ENCODE measurements at regions of chr2 and their contacts with region 1.

Region 1: DNA sequence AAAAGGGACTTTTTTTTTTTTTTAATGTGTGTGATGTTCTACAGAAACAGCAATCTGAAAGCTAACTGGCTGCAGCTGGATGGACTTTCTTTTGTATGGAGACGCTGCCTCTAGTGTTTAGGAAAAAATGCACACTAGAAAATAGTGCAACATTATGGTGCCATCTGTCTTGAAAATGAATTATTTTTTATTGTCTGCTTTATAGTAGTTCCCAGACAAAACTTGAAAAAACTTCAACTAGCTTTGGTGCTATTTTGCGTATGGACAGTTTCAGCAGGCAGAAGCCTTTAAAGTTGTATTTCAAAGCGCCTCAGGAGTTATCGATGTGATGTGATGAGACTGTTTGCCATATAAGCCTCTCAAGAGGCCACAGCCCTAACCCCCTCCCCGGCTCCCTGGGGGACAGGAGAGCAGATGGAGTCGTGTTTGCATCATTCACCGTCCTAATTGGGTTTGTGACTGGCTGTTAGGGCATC is 86.9 kb downstream of the LTBP1 start:
- DNase-seq: peak; percentile 10
- ATAC-seq: peak; percentile 67
- H3K4me3 ChIP-seq: no peak overlapping the region
- H3K27ac ChIP-seq: no peak overlapping the region
- H3K4me1 ChIP-seq: no peaks in the 10 kb centered on the region
- H3K27me3 ChIP-seq: no peaks in the 10 kb centered on the region
- CTCF ChIP-seq: peak; percentile 52 to 98 (median 60)
- POLR2A ChIP-seq: no peak
- RAD21 ChIP-seq: peak; percentile 89

Region 2: DNA sequence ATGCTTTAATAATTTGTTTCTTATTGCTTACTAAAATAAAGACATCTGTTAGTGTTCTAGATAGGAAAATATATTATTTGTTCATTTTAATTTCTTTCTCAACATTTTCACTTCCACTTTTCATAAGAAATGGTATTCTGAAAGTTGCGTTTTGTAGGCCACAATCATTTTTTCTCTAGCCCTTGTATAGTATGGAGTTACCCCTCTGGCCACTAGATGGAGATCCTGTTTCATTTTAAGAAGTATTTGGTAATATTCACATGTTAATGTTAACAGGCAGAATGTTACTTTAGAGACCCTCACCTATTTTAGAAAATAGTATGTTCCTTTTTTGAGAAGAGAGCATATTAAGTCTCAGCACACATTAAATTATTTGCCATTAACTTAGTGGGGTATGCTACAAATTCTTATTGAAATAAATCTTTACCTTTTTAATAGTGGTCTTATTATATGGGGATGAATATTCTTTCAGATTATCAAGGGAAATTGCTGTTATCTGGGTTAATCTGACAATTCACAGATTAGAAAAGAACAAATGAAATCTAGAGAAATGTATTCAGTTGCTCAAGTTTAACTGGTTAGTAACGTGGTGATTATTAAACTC is 479.7 kb before region 1 on chr2:
- CTCF ChIA-PET with region 1: interaction called, 5 read pairs
- POLR2A ChIA-PET with region 1: no interaction called
- RAD21 ChIA-PET with region 1: no interaction called
- intact Hi-C with region 1: loop called (anchors 5 kb)
- DNase-seq: peak; percentile 12
- ATAC-seq: peak; percentile 88
- H3K4me3 ChIP-seq: no peak overlapping the region
- H3K27ac ChIP-seq: no peak overlapping the region
- H3K4me1 ChIP-seq: no peaks in the 10 kb centered on the region
- H3K27me3 ChIP-seq: no peaks in the 10 kb centered on the region
- CTCF ChIP-seq: peak; percentile 54 to 77 (median 74); a peak in 5 of 6 replicates
- POLR2A ChIP-seq: no peak
- RAD21 ChIP-seq: peak; percentile 66

Region 3: GRCh38 chr2:33275689-33276444 is 242.2 kb after region 1 on chr2:
- CTCF ChIA-PET with region 1: interaction called, 5 read pairs
- POLR2A ChIA-PET with region 1: no interaction called
- RAD21 ChIA-PET with region 1: no interaction called
- intact Hi-C with region 1: loop called (anchors 2 kb)
- DNase-seq: peak; percentile 6
- ATAC-seq: peak; percentile 76
- H3K4me3 ChIP-seq: no peak overlapping the region
- H3K27ac ChIP-seq: no peak overlapping the region
- H3K4me1 ChIP-seq: peaks cover 0 to 7% of the 10 kb centered on the region in 2 experiments; a peak in 2 of 4 replicates
- H3K27me3 ChIP-seq: no peaks in the 10 kb centered on the region
- CTCF ChIP-seq: no peak
- POLR2A ChIP-seq: no peak
- RAD21 ChIP-seq: no peak

Region 4: DNA sequence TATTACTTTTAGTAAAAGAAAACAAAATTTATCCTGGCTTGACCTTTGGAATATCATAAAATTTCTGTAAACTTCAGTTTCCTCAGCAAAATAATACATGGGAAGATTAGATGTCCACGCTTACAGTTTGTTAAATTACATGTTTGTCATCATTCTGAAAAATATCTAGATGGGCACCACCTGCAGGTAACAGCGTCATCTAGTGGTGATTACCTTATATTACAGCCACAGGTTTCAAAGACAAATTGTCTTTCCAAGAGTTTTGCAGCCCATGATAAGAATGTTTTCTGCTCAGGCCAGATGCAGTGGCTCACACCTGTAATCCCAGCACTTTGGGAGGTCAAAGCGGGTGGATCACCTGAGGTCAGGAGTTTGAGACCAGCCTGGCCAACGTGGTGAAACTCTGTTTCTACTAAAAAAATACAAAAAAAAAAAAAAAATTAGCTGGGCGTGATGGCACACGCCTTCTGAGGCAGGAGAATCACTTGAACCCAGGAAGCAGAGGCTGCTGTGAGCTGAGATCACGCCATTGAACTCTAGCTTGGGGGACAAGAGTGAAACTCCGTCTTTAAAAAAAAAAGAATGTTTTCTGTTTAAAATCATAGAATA is 346.5 kb after region 1 on chr2:
- CTCF ChIA-PET with region 1: interaction called, 18 read pairs
- POLR2A ChIA-PET with region 1: no interaction called
- RAD21 ChIA-PET with region 1: interaction called in 1 of 2 experiments, 3 read pairs
- intact Hi-C with region 1: loop called (anchors 1 kb)
- DNase-seq: peak; percentile 18
- ATAC-seq: no peak
- H3K4me3 ChIP-seq: no peak overlapping the region
- H3K27ac ChIP-seq: no peak overlapping the region
- H3K4me1 ChIP-seq: no peaks in the 10 kb centered on the region
- H3K27me3 ChIP-seq: no peaks in the 10 kb centered on the region
- CTCF ChIP-seq: peak; percentile 54 to 90 (median 75); a peak in 5 of 6 replicates
- POLR2A ChIP-seq: no peak
- RAD21 ChIP-seq: peak; percentile 82

Region 5: GRCh38 chr2:33570681-33571080 is 537.0 kb after region 1 on chr2:
- CTCF ChIA-PET with region 1: no interaction called
- POLR2A ChIA-PET with region 1: no interaction called
- RAD21 ChIA-PET with region 1: no interaction called
- intact Hi-C with region 1: loop called (anchors 5 kb)
- DNase-seq: no peak
- ATAC-seq: no peak
- H3K4me3 ChIP-seq: no peak overlapping the region
- H3K27ac ChIP-seq: no peak overlapping the region
- H3K4me1 ChIP-seq: no peaks in the 10 kb centered on the region
- H3K27me3 ChIP-seq: no peaks in the 10 kb centered on the region
- CTCF ChIP-seq: no peak
- POLR2A ChIP-seq: no peak
- RAD21 ChIP-seq: no peak

Measured in HCT116 (cell line).